IMR-90 (cell line): ENCODE measurements at regions of chr11 and their contacts with region 1.

Region 1: GRCh38 chr11:15602785-15603567 is 488.3 kb downstream of the INSC start:
- DNase-seq: no peak
- ATAC-seq: no peak
- H3K4me3 ChIP-seq: no peak overlapping the region
- H3K27ac ChIP-seq: no peak overlapping the region
- H3K4me1 ChIP-seq: no peaks in the 10 kb centered on the region
- H3K27me3 ChIP-seq: peaks cover 19% of the 10 kb centered on the region
- CTCF ChIP-seq: no peak
- POLR2A ChIP-seq: no peak
- RAD21 ChIP-seq: no peak

Region 2: GRCh38 chr11:16448123-16448717 is 845.2 kb after region 1 on chr11:
- CTCF ChIA-PET with region 1: no interaction called
- POLR2A ChIA-PET with region 1: interaction called, 11 read pairs
- dilution Hi-C with region 1: no loop called
- in situ Hi-C with region 1: no loop called
- intact Hi-C with region 1: no loop called
- DNase-seq: peak; percentile 17
- ATAC-seq: no peak
- H3K4me3 ChIP-seq: no peak overlapping the region
- H3K27ac ChIP-seq: no peak overlapping the region
- H3K4me1 ChIP-seq: peaks cover 2% of the 10 kb centered on the region; the same call in 1 of the 2 replicates
- H3K27me3 ChIP-seq: no peaks in the 10 kb centered on the region
- CTCF ChIP-seq: no peak
- POLR2A ChIP-seq: no peak
- RAD21 ChIP-seq: no peak